WTC11 (cell line): ENCODE measurements at regions of chr9 and their contacts with region 1.

Region 1: GRCh38 chr9:128150594-128151308 is 1.5 kb downstream of the LCN2 start:
- DNase-seq: peak; percentile 82
- ATAC-seq: peak; percentile 95
- H3K4me3 Mint-ChIP-seq: peak overlapping the region; percentile 25; the same call in 1 of the 2 replicates
- H3K27ac Mint-ChIP-seq: no peak overlapping the region
- H3K4me1 Mint-ChIP-seq: peaks cover 12% of the 10 kb centered on the region
- H3K27me3 Mint-ChIP-seq: peaks cover 7% of the 10 kb centered on the region; the same call in 1 of the 2 replicates
- CTCF ChIP-seq: peak; percentile 59

Region 2: GRCh38 chr9:128136816-128137793 is 13.6 kb before region 1 on chr9:
- CTCF ChIA-PET with region 1: interaction called, 11 read pairs
- POLR2A ChIA-PET with region 1: no interaction called
- DNase-seq: no peak
- ATAC-seq: no peak; the same call in 1 of the 2 replicates
- H3K4me3 Mint-ChIP-seq: no peak overlapping the region
- H3K27ac Mint-ChIP-seq: no peak overlapping the region
- H3K4me1 Mint-ChIP-seq: peaks cover 6% of the 10 kb centered on the region; the same call in 1 of the 2 replicates
- H3K27me3 Mint-ChIP-seq: peaks cover 30% of the 10 kb centered on the region
- CTCF ChIP-seq: no peak

Region 3: GRCh38 chr9:128182893-128183588 is 32.3 kb after region 1 on chr9:
- CTCF ChIA-PET with region 1: interaction called, 5 read pairs
- POLR2A ChIA-PET with region 1: interaction called, 15 read pairs
- DNase-seq: no peak
- ATAC-seq: no peak
- H3K4me3 Mint-ChIP-seq: no peak overlapping the region
- H3K27ac Mint-ChIP-seq: no peak overlapping the region
- H3K4me1 Mint-ChIP-seq: no peaks in the 10 kb centered on the region
- H3K27me3 Mint-ChIP-seq: no peaks in the 10 kb centered on the region
- CTCF ChIP-seq: no peak

Region 4: DNA sequence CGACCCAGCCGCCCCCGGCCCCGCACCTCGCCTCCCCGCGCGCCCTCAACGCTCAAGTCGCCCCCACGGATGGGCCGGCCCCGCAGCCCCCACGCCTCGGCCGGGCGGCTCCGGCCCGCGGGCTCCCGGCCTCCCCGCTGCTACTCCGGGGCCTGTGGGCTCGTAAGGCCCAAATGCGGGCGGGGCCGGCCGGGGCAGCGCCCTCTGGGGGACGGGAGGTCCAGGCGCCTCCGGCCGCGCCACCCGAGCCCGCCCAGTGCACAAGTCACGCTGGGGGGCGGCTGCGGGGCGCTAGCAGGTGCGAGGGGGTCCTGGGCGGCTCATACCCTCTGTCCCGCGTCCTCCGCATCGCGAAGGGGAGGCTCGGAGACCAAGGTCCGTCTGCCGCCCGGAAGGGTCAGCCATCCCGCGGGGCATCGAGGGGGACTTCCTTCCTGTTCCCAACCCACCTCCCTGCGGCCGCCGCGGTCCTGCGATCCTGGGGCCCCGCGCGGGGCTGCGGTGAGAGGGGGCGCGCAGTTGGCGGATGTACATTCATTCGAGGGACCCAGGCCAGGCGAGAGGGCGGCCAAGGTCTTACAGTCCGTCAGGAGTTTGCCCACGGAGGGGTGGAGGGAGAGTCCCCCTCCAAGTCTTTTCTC is 40.8 kb after region 1 on chr9 and contains the start of gene CIZ1:
- CTCF ChIA-PET with region 1: interaction called, 11 read pairs
- POLR2A ChIA-PET with region 1: no interaction called
- DNase-seq: peak; percentile 75
- ATAC-seq: peak; percentile 91
- H3K4me3 Mint-ChIP-seq: peak within 1 kb of the TSS; percentile 90
- H3K27ac Mint-ChIP-seq: no peak within 1 kb of the TSS
- H3K4me1 Mint-ChIP-seq: peaks cover 11% of the 10 kb centered on the region
- H3K27me3 Mint-ChIP-seq: peaks cover 10% of the 10 kb centered on the region
- CTCF ChIP-seq: peak; percentile 40; the same call in 1 of the 2 replicates
- total RNA-seq, gene CIZ1: 86.1 to 90.6 TPM (median 90.2 TPM) in 3 replicates

Region 5: DNA sequence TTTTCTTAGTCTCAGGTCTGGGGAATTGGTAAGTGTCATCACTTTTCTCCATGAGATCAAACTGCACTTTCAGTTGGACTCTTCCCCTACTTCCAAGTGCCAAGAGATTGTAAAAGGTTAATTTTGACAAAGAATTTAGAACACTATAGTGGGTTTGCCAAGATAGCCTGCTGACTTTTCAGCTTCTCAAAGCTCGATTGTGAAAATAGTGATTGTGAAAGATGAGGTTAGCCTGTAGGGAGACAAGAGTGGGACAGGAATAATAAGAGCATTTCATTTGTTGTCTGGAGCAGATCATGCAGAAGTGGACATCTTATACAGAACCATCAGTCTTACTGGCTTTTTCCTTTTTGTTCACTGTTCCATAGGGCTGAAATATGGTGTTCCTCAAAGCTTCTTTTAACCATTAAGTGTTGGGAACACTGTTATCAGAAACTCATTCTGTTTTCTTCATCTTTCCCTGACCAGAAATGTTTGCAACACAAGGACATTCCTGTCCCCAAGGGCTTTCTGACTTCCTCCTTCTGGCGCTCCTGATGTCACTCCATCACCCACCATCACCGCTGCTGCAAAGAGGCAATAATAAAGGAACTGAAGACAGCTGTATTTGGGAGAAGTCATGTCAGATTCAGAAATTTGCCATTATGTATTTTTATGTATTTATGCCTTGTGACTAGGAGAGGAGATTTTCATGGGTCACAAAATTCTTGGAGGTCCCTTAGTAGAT is 390.0 kb after region 1 on chr9:
- CTCF ChIA-PET with region 1: no interaction called
- POLR2A ChIA-PET with region 1: no interaction called
- DNase-seq: no peak
- ATAC-seq: no peak
- H3K4me3 Mint-ChIP-seq: no peak overlapping the region
- H3K27ac Mint-ChIP-seq: no peak overlapping the region
- H3K4me1 Mint-ChIP-seq: no peaks in the 10 kb centered on the region
- H3K27me3 Mint-ChIP-seq: no peaks in the 10 kb centered on the region
- CTCF ChIP-seq: no peak

Region 6: GRCh38 chr9:128550770-128551656 is 400.3 kb after region 1 on chr9:
- CTCF ChIA-PET with region 1: no interaction called
- POLR2A ChIA-PET with region 1: no interaction called
- DNase-seq: peak; percentile 25
- ATAC-seq: no peak
- H3K4me3 Mint-ChIP-seq: peak overlapping the region; percentile 92
- H3K27ac Mint-ChIP-seq: peak overlapping the region; percentile 99
- H3K4me1 Mint-ChIP-seq: peaks cover 19% of the 10 kb centered on the region
- H3K27me3 Mint-ChIP-seq: peaks cover 3% of the 10 kb centered on the region; the same call in 1 of the 2 replicates
- CTCF ChIP-seq: no peak